ENCODE measurements at regions of chr1 and their contacts with region 1.

Region 1: DNA sequence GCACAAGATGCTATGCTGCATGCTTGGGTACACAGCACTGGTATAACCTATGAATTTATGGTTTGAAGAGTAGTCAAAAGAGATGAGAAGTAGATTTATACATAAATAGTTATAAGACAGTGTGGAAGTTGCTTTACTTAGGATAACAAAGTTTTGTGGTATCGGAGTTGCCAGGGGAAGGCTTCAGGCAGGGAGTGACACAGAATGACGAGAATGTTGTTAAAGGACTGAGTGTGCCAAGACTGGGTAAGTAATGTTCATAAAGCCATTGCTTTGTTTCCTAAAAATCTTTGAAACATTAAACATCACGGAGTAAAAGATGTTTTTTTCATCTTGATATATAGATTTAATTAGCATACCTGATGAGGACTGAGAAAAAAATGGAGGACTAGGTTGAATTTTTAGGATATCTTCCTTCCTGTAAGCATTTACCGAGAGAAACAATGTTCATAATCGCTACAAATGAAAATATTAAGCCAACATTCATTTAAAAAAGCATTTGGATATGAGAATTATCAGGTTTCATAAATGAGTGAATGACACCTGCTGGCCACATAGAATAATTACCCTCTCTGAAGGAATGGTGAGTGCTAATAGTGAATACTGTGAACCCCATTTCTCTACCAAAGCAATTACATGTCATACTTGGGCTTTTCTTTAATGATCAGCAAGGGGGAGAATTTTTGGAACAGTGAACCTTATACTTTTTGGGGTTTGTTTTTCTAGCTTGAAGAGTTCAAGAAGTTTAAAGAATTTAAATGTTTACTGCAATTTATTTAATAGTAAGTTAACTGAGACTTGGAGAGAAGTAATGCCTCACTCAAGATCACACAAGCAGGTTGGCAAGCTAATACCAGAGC is 28.4 kb downstream of the EXTL2 start:
- DNase-seq: peak; percentile 48
- H3K4me3 ChIP-seq: no peak overlapping the region
- H3K27ac ChIP-seq: peak overlapping the region; percentile 2
- H3K4me1 ChIP-seq: peaks cover 21% of the 10 kb centered on the region
- H3K27me3 ChIP-seq: no peaks in the 10 kb centered on the region
- CTCF ChIP-seq: peak; percentile 49 to 65

Region 2: GRCh38 chr1:100469578-100469977 is 396.7 kb before region 1 on chr1:
- CTCF ChIA-PET with region 1: no interaction called
- dilution Hi-C with region 1: loop called (anchors 10 kb)
- in situ Hi-C with region 1: loop called in 1 of 2 experiments (anchors 5 kb)
- intact Hi-C with region 1: no loop called
- DNase-seq: no peak
- H3K4me3 ChIP-seq: no peak overlapping the region
- H3K27ac ChIP-seq: no peak overlapping the region
- H3K4me1 ChIP-seq: no peaks in the 10 kb centered on the region
- H3K27me3 ChIP-seq: no peaks in the 10 kb centered on the region
- CTCF ChIP-seq: no peak

Region 3: DNA sequence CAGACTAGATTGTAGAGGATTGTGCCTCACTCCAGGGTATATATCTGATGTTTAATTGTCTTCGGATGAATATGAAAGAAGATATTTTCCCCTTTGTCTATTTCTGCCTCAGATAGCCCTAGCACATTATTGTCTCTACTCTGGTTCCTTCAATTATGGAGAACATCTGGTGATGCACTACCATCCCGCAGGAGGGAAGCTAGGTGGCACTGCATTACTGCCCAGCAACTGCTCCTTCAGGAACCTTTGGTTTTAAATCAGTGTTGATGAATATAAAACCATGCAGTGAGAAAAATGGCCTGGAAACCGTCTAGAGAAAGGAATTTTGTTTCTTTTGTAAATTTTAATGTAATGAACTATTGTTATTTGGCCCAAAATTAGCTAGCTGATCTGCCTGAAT is 259.8 kb before region 1 on chr1:
- CTCF ChIA-PET with region 1: no interaction called
- dilution Hi-C with region 1: no loop called
- in situ Hi-C with region 1: loop called (anchors 5 kb)
- intact Hi-C with region 1: loop called (anchors 1 kb)
- DNase-seq: peak; percentile 51
- H3K4me3 ChIP-seq: no peak overlapping the region
- H3K27ac ChIP-seq: no peak overlapping the region
- H3K4me1 ChIP-seq: peaks cover 10% of the 10 kb centered on the region
- H3K27me3 ChIP-seq: no peaks in the 10 kb centered on the region
- CTCF ChIP-seq: peak; percentile 77 to 95

Region 4: GRCh38 chr1:100671601-100672000 is 194.7 kb before region 1 on chr1:
- CTCF ChIA-PET with region 1: no interaction called
- dilution Hi-C with region 1: no loop called
- in situ Hi-C with region 1: no loop called
- intact Hi-C with region 1: loop called (anchors 1 kb)
- DNase-seq: peak; percentile 34
- H3K4me3 ChIP-seq: no peak overlapping the region
- H3K27ac ChIP-seq: no peak overlapping the region
- H3K4me1 ChIP-seq: no peaks in the 10 kb centered on the region
- H3K27me3 ChIP-seq: no peaks in the 10 kb centered on the region
- CTCF ChIP-seq: peak in 1 of 2 donors; percentile 23

Region 5: GRCh38 chr1:100699744-100700143 is 166.5 kb before region 1 on chr1:
- CTCF ChIA-PET with region 1: no interaction called
- dilution Hi-C with region 1: no loop called
- in situ Hi-C with region 1: no loop called
- intact Hi-C with region 1: no loop called
- DNase-seq: no peak
- H3K4me3 ChIP-seq: no peak overlapping the region
- H3K27ac ChIP-seq: no peak overlapping the region
- H3K4me1 ChIP-seq: no peaks in the 10 kb centered on the region
- H3K27me3 ChIP-seq: no peaks in the 10 kb centered on the region
- CTCF ChIP-seq: no peak

Region 6: DNA sequence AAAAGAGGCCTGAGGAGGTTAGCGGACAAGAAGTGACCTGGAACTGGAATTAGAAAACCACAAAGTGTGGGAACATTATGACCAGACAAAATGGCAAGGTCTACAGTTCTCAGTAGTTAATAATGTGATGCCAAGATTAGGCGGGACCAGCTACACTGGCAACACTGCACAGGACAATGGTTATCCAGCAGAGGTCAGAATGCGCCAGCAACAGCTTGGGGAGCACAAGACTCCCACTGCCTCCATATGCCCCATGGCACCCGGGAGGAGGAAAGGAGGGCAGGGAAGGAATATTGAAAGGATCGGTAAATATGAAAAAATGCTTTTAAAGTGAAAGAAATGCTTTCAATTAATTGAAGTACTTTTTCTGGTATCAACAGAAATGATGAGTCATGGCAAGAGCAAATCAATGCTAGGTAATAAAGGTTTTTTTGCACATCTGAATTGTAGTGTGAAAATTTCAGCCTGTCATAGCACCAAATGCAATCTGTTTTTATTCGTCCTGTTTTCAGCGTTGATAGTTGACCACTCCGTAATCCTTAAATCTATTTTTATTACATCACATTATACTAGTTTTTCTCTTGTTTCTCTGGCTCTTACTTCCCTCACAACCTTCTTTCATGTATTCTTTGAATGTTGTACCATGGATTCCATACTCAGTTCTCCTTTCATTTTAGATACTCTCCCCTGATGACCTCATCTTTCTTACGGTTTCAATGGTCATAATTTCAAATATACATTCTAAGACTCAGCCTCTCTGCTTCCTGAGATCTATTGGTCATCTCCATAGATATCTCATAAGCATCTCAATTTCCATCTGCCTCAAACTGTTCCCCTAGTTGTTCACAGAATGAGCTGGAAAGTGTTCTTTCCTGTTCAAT is 116.0 kb before region 1 on chr1:
- CTCF ChIA-PET with region 1: no interaction called
- dilution Hi-C with region 1: no loop called
- in situ Hi-C with region 1: no loop called
- intact Hi-C with region 1: loop called (anchors 2 kb)
- DNase-seq: no peak
- H3K4me3 ChIP-seq: no peak overlapping the region
- H3K27ac ChIP-seq: no peak overlapping the region
- H3K4me1 ChIP-seq: no peaks in the 10 kb centered on the region
- H3K27me3 ChIP-seq: no peaks in the 10 kb centered on the region
- CTCF ChIP-seq: peak in 1 of 2 donors; percentile 1

Measured in mammary epithelial cell (primary cell).